ENCODE measurements at regions of chr1 and their contacts with region 1.

Region 1: DNA sequence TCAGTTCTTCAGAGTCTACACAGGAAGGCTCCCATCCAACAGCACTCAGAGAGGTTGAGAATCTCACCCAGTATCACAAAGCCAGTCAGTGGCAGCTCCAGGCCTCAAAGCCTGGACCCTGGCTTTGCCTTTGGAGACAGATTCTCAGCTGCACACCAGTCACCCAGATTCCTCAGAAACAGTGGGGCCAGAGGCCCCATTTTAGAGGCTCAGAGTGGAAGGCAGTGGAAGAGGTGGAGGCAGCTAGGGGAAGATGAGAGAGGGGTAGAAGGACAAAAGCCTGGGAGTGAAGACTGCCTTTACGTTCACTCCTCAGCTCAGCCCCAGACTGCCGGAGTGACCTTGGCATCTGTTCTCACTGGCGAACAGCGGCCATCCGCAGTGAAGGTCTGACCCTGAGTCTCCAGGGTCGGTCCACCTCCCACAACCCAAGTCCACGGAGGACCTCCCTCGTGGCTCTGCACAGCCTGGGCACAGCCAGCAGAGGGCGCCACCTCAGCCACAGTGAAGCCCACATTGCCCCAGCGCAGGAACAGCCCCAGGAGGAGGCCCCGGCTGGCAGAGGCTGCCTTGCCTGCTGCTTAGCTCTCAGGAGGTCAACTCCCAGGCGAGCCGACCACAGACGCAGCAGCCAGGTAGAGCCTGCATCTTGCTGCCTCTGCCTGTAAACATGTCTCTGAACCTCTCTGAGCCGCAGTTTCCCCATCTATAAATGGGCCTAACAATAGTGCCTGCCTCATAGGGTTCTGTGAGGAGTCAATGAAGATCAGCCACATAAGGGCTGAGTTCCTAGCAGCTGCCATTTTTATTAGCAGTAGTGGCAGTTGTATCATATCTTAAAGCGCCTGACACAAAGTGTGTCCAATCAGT is 5.9 kb upstream of the FNDC5 start:
- DNase-seq: peak; percentile 81
- ATAC-seq: peak; percentile 57
- H3K4me3 Mint-ChIP-seq: peak overlapping the region; percentile 20; the same call in 1 of the 2 replicates
- H3K27ac Mint-ChIP-seq: no peak overlapping the region
- H3K4me1 Mint-ChIP-seq: peaks cover 33% of the 10 kb centered on the region
- H3K27me3 Mint-ChIP-seq: peaks cover 7% of the 10 kb centered on the region
- CTCF ChIP-seq: peak; percentile 96

Region 2: DNA sequence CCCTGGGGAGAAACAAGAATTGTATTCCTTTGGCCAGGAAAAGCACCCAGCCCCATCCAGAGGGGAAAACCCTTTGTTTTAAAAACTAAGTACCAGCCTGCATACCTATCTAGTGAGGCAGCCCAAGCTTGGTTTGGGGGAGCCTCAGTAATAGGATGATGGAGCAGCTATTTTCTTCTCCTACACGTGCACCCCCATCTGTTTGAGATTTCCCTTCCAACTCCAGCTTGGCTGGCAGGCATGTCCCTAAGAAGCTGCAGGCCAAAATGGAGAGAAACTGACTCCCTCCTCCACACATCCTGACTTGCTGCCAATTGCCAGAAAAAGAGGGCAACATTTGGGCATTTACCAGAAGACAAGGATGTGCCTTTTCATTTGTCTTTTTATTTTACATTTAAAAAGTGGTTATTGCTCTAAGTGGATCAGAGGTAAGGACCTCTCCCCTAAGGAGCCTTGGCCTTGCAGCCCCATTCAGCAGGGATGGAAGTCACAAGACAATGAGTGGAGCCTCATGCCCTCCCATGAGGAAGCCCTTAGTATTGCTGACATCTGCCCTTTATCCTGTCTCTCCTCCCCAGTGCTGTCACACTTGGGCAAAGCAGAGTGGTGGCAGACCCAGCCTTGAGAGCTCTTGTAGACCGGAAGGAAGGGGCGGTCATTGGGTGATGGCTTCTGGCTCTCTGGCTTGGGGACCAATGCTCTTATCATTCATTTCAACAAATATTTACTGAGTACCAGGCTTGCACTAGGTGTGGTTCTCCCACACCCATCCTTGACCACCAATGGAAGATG is 14.5 kb before region 1 on chr1:
- CTCF ChIA-PET with region 1: interaction called, 14 read pairs
- POLR2A ChIA-PET with region 1: no interaction called
- DNase-seq: no peak
- ATAC-seq: no peak
- H3K4me3 Mint-ChIP-seq: no peak overlapping the region
- H3K27ac Mint-ChIP-seq: no peak overlapping the region
- H3K4me1 Mint-ChIP-seq: no peaks in the 10 kb centered on the region; the same call in 1 of the 2 replicates
- H3K27me3 Mint-ChIP-seq: peaks cover 3% of the 10 kb centered on the region; the same call in 1 of the 2 replicates
- CTCF ChIP-seq: no peak

Region 3: GRCh38 chr1:32892368-32893197 is 16.0 kb after region 1 on chr1:
- CTCF ChIA-PET with region 1: interaction called, 93 read pairs
- POLR2A ChIA-PET with region 1: no interaction called
- DNase-seq: peak; percentile 92
- ATAC-seq: peak; percentile 85
- H3K4me3 Mint-ChIP-seq: peak overlapping the region; percentile 79
- H3K27ac Mint-ChIP-seq: no peak overlapping the region
- H3K4me1 Mint-ChIP-seq: peaks cover 11% of the 10 kb centered on the region
- H3K27me3 Mint-ChIP-seq: peaks cover 59% of the 10 kb centered on the region
- CTCF ChIP-seq: peak; percentile 97

Region 4: DNA sequence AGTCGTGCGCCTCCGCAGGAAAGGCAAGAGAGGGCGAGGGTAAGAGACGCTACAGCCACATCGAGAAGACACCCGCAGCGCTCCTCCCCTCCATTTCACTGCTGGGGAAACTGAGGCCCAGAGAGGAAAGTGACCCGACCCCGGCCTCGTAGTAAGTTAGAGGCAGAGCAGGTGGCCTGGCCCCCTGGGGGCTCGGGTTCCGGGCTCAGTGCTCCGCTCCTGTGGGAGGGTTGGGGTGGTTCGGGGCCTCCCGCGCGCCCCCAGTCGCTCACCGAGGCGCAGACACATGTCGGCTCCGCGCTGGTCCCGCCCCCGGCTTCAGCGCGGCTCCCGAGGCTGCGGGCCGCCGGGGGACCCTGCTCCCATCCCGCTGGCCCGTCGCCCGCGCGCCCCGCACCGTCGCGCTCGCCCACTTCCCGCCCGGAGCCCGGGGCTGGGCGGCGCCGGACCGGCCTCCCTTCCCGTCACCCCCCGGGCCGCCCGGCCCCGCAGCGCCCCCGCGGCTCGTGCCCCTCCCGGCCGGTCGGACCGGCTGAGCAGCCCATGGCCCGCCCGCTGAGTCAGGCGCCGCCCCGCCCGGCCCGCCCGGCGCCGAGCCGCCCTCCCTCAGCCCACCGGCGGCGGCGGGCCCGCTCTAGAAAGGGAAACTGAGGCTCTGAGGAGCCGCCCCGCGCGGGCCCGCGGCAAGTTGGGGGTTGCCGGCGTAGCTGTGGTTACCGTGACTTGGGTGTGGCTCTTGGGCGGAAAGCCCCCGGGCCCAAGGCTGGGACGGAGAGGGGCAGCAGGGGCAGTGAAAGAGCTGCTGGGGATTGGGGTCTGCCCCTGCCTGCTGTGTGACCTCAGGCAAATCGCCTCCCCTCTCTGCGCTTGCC is 24.6 kb after region 1 on chr1 and contains the start of gene TMEM54:
- CTCF ChIA-PET with region 1: interaction called, 15 read pairs
- POLR2A ChIA-PET with region 1: no interaction called
- DNase-seq: peak; percentile 45
- ATAC-seq: peak; percentile 59
- H3K4me3 Mint-ChIP-seq: peak within 1 kb of the TSS; percentile 79
- H3K27ac Mint-ChIP-seq: no peak within 1 kb of the TSS
- H3K4me1 Mint-ChIP-seq: peaks cover 9% of the 10 kb centered on the region
- H3K27me3 Mint-ChIP-seq: peaks cover 64% of the 10 kb centered on the region
- CTCF ChIP-seq: no peak
- total RNA-seq, gene TMEM54: 20.7 to 29.0 TPM (median 24.9 TPM) in 3 replicates

Region 5: DNA sequence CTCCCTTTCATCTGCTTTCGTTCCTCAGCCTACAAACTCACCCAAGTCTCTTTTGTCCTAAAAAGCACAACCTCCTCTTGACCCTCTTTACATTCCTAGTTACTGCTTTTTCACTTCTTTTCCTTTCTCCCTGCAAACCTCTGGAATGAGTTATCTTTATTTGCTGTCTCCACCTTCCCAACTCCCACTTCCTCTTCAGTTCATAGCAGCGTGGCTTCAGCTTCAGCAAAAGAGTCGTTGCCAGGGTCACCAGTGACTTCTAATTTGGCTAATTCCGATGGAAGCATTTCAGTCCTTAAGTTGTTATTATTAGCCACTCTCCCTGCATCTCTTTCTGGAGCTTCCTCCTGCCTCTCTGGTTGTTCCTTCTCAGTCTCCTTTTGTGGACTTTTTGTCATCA is 30.9 kb after region 1 on chr1:
- CTCF ChIA-PET with region 1: interaction called, 15 read pairs
- POLR2A ChIA-PET with region 1: no interaction called
- DNase-seq: no peak
- ATAC-seq: no peak
- H3K4me3 Mint-ChIP-seq: no peak overlapping the region
- H3K27ac Mint-ChIP-seq: no peak overlapping the region
- H3K4me1 Mint-ChIP-seq: no peaks in the 10 kb centered on the region
- H3K27me3 Mint-ChIP-seq: peaks cover 25% of the 10 kb centered on the region
- CTCF ChIP-seq: no peak

Region 6: DNA sequence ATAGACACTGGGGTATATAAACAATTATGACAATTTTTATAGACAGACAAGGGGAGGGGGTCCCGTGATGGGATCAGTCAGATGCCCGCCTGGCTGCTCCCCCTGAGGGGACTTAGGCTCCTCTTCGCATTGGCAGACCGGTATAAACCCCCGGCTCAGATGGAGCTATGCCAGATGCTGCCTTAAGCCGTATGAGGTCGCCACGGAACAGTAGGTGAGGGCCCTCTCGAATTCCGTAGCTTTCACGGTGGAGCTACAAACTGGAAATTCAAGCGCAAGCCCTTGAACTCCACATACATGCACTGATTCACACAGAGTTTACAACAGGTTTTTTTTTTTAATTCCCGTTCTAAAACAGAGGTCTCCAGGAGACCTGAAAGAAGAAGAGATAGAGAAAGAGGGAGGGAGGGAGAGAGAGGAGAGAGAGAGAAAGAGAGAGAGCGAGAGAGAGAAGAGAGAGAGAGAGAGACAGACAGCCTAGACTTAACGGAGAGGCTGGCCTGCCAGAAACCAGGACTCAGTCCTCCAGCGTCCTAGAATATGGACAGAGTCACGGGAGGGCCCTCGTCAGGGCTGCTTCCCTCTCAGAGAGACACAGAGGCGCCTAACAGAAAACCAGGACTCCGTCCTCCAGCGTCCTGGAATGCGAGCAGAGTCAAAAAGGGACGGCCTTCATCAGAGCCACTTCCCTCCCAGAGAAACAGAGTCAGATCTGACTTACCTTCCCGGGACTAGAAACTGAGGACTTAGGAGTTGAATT is 49.0 kb after region 1 on chr1:
- CTCF ChIA-PET with region 1: interaction called, 17 read pairs
- POLR2A ChIA-PET with region 1: no interaction called
- DNase-seq: peak; percentile 53
- ATAC-seq: peak; percentile 87
- H3K4me3 Mint-ChIP-seq: peak overlapping the region; percentile 85
- H3K27ac Mint-ChIP-seq: no peak overlapping the region
- H3K4me1 Mint-ChIP-seq: peaks cover 21% of the 10 kb centered on the region
- H3K27me3 Mint-ChIP-seq: peaks cover 84% of the 10 kb centered on the region
- CTCF ChIP-seq: no peak

Region 7: DNA sequence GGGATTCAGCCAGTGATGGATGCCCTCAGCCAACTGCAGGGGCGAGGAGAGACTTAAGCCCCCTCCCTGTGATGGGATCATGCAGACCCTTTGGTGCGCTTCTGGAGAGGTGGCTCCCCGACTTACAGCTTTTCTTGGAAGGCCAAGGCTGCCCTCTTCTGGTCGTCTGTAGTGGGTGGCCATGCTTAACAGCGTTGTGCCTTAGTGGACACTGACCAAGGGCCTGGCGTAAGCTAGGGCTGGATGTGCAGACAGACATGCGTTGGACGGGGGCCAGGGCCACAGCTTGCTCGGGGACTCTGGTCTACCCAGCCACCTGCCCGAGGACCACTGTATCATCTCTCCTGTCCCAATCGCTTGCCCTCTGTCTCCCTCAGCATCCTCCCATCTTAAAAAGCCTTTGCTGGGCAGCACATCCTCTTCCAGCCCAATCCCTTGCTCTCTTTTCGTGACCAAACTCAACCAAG is 209.8 kb after region 1 on chr1:
- CTCF ChIA-PET with region 1: interaction called, 36 read pairs
- POLR2A ChIA-PET with region 1: no interaction called
- DNase-seq: peak; percentile 84
- ATAC-seq: peak; percentile 91
- H3K4me3 Mint-ChIP-seq: no peak overlapping the region
- H3K27ac Mint-ChIP-seq: no peak overlapping the region
- H3K4me1 Mint-ChIP-seq: peaks cover 11% of the 10 kb centered on the region
- H3K27me3 Mint-ChIP-seq: peaks cover 51% of the 10 kb centered on the region
- CTCF ChIP-seq: peak; percentile 76

Measured in WTC11 (cell line).